ENCODE measurements at regions of chr2 and their contacts with region 1.

Region 1: DNA sequence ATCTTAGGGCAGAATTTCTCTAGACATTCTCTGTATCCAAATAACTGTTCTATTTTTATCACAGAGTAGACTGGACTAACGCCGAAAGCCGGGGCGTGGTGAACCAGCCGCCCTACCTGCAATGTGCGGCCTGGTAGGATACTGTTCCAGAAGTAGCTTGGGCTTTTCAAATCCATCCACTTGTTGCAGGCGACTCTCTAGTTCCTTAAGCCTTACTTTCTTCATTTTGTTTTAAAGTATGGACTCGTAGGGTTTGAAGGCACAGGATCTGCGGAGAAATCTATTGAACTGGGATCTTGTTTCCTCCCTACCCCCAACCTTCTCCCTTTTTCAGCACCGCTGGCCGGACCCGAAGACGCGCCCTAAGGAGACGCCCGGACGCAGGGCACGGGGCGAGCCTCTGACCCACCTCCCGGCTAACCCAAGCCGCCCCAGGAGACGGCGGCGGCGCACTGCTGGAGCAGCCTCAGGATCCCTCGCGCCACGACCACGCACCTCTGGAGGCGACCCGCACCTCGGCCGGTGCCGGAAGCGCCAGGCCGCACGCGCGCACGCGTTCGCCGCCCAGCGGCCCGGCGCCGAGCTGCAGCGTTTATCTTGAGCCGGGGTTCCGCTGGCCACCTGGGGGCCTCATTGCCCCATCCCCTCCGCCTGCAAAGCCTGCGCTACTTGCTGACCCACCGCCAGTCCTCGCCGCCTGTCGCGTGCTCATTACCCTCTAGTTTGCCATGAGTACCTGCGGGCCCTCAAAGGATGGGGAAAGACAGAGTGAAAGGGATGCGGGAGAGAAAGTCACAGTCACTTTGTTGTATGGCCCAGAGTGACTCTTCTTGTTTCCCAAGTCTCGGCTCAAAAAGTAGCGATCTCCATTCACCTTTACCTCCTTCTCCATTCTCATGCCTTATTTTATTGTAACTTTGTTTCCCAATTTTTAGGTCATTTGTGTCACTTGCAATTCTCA is at the start of gene METTL5:
- DNase-seq: peak; percentile 48 to 89 (median 69)
- ATAC-seq: peak; percentile 64
- H3K4me3 ChIP-seq: peak within 1 kb of the TSS; percentile 94
- H3K4me3 Mint-ChIP-seq: peak within 1 kb of the TSS; percentile 89
- H3K27ac ChIP-seq: peak within 1 kb of the TSS; percentile 37 to 63
- H3K27ac Mint-ChIP-seq: peak within 1 kb of the TSS; percentile 82
- H3K4me1 ChIP-seq: peaks cover 52% of the 10 kb centered on the region
- H3K4me1 Mint-ChIP-seq: peaks cover 73% of the 10 kb centered on the region
- H3K27me3 ChIP-seq: no peaks in the 10 kb centered on the region
- H3K27me3 Mint-ChIP-seq: no peaks in the 10 kb centered on the region
- CTCF ChIP-seq: peak; percentile 91
- total RNA-seq, gene METTL5: 13.2 to 16.0 TPM

Region 2: GRCh38 chr2:169573160-169573973 is 251.3 kb before region 1 on chr2 and contains the start of gene FASTKD1:
- CTCF ChIA-PET with region 1: interaction called, 3 read pairs
- POLR2A ChIA-PET with region 1: interaction called, 3 read pairs
- intact Hi-C with region 1: loop called in 1 of 2 experiments (anchors 5 kb)
- DNase-seq: peak; percentile 67 to 94 (median 80)
- ATAC-seq: peak; percentile 100
- H3K4me3 ChIP-seq: peak within 1 kb of the TSS; percentile 98
- H3K4me3 Mint-ChIP-seq: peak within 1 kb of the TSS; percentile 99
- H3K27ac ChIP-seq: peak within 1 kb of the TSS; percentile 1 to 68
- H3K27ac Mint-ChIP-seq: peak within 1 kb of the TSS; percentile 79
- H3K4me1 ChIP-seq: peaks cover 6% of the 10 kb centered on the region
- H3K4me1 Mint-ChIP-seq: peaks cover 25% of the 10 kb centered on the region
- H3K27me3 ChIP-seq: no peaks in the 10 kb centered on the region
- H3K27me3 Mint-ChIP-seq: peaks cover 4% of the 10 kb centered on the region
- CTCF ChIP-seq: no peak
- total RNA-seq, gene FASTKD1: 6.3 to 7.2 TPM

Region 3: DNA sequence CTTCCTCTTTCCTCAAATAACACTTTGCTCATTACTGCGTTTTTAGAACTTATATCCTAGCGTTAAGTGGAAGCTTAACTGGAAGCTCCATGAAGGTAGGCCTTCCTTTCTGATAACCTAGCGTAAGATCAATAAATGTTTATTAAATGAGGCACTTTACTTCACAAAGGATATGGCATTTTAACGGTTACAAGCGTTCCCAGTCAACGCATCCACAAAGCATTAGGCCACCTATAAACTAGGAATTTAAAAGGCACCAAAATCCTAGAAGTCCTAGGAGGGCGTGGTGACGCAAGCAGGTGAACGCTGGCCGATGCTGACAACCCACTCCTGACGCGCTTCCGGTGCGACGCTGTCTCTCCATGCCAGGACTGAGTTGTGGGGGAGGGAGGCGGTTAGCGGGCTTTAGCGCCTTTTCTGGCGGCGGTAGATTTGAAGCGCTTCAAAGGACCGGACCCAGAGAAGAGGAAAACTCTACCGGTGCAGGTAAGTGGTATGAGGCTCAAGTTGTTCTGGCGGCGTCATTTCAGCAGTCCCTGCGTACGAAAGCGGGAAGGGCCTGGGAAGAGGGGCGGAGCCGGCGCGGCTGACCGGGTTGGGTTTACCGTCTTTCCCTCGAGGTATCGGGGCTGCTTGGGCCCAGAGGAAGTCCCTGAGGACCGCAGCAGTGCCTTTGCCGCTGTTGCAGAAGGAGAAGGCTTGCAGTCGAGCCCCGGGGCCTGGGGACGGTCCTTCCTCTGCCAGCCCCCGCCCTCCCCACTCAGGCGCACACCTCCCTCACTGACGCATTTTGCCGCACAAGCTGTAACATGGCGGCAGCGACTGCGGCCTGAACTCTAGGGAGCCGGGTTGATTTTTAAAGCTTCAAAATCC is 240.4 kb before region 1 on chr2 and contains the start of gene PPIG:
- CTCF ChIA-PET with region 1: no interaction called
- POLR2A ChIA-PET with region 1: interaction called, 18 read pairs
- intact Hi-C with region 1: loop called in 1 of 2 experiments (anchors 5 kb)
- DNase-seq: peak; percentile 73 to 96 (median 82)
- ATAC-seq: peak; percentile 92
- H3K4me3 ChIP-seq: peak within 1 kb of the TSS; percentile 81
- H3K4me3 Mint-ChIP-seq: peak within 1 kb of the TSS; percentile 98
- H3K27ac ChIP-seq: peak within 1 kb of the TSS; percentile 97 to 99
- H3K27ac Mint-ChIP-seq: peak within 1 kb of the TSS; percentile 99
- H3K4me1 ChIP-seq: peaks cover 24% of the 10 kb centered on the region
- H3K4me1 Mint-ChIP-seq: peaks cover 39% of the 10 kb centered on the region
- H3K27me3 ChIP-seq: no peaks in the 10 kb centered on the region
- H3K27me3 Mint-ChIP-seq: no peaks in the 10 kb centered on the region
- CTCF ChIP-seq: no peak
- total RNA-seq, gene PPIG: 83.4 to 87.8 TPM

Region 4: GRCh38 chr2:169694113-169694903 is 130.3 kb before region 1 on chr2 and contains the starts of genes CFAP210 and PHOSPHO2:
- CTCF ChIA-PET with region 1: interaction called, 15 read pairs
- POLR2A ChIA-PET with region 1: interaction called, 4 read pairs
- intact Hi-C with region 1: loop called (anchors 2 to 5 kb)
- DNase-seq: peak; percentile 97 to 99 (median 99)
- ATAC-seq: peak; percentile 91
- H3K4me3 ChIP-seq: peak within 1 kb of the TSS; percentile 70
- H3K4me3 Mint-ChIP-seq: peak within 1 kb of the TSS; percentile 91
- H3K27ac ChIP-seq: peak within 1 kb of the TSS; percentile 80 to 91
- H3K27ac Mint-ChIP-seq: peak within 1 kb of the TSS; percentile 95
- H3K4me1 ChIP-seq: peaks cover 18% of the 10 kb centered on the region
- H3K4me1 Mint-ChIP-seq: peaks cover 18% of the 10 kb centered on the region
- H3K27me3 ChIP-seq: peaks cover 0 to 5% of the 10 kb centered on the region in 2 experiments
- H3K27me3 Mint-ChIP-seq: no peaks in the 10 kb centered on the region
- CTCF ChIP-seq: no peak
- total RNA-seq, gene CFAP210: 2.2 to 3.1 TPM
- total RNA-seq, gene PHOSPHO2: 4.5 to 6.5 TPM

Region 5: DNA sequence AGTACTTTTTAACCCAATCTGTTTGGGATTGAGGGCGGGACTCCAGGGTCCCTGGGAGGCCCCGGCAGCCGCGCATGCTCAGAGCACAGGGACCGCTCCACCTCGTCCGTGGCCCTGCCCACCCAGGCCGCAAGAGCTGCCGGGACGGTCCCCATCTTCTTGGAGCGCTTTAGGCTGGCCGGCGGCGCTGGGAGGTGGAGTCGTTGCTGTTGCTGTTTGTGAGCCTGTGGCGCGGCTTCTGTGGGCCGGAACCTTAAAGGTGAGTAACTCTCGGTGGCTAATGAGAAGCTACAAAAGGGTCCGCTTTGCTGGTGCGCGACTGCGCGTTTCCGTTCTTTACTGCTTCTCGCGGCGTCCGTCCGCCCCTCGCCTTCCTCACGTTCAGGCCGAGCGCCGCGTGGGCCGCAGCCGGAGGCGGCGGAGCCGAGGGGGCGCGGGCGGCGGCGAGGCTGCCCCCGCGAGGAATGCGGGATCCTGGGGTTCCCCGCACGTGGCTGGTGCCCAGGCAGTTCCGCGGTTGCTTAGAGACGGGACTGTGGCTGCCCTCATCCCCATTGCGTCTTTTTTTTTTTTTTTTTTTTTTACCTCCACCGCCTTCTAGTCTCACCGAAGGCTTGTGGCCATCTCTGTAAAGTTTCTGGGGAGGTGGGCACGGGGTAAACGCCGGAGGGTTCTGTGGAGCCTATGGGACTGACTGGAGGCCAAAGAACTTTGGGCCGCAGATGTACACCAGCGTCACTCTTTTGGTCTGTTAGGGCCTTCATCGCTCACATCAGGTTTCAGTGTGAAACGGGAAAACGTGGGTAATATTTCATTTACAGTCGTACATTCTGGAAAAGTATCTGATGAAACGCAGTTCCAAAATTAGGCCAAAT is 25.7 kb before region 1 on chr2 and contains the start of gene SSB:
- CTCF ChIA-PET with region 1: interaction called, 17 read pairs
- POLR2A ChIA-PET with region 1: interaction called, 16 read pairs
- intact Hi-C with region 1: loop called (anchors 2 kb)
- DNase-seq: peak; percentile 81 to 97 (median 92)
- ATAC-seq: peak; percentile 94
- H3K4me3 ChIP-seq: peak within 1 kb of the TSS; percentile 87
- H3K4me3 Mint-ChIP-seq: peak within 1 kb of the TSS; percentile 91
- H3K27ac ChIP-seq: peak within 1 kb of the TSS; percentile 86 to 87
- H3K27ac Mint-ChIP-seq: peak within 1 kb of the TSS; percentile 96
- H3K4me1 ChIP-seq: peaks cover 23% of the 10 kb centered on the region
- H3K4me1 Mint-ChIP-seq: peaks cover 46% of the 10 kb centered on the region
- H3K27me3 ChIP-seq: no peaks in the 10 kb centered on the region
- H3K27me3 Mint-ChIP-seq: no peaks in the 10 kb centered on the region
- CTCF ChIP-seq: no peak
- total RNA-seq, gene SSB: 174 to 181 TPM

Region 6: GRCh38 chr2:169877398-169877797 is 52.7 kb after region 1 on chr2:
- CTCF ChIA-PET with region 1: interaction called, 6 read pairs
- POLR2A ChIA-PET with region 1: no interaction called
- intact Hi-C with region 1: loop called in 1 of 2 experiments (anchors 5 kb)
- DNase-seq: peak in 4 of 14 experiments; percentile 9 to 30 (median 20)
- ATAC-seq: no peak
- H3K4me3 ChIP-seq: no peak overlapping the region
- H3K4me3 Mint-ChIP-seq: no peak overlapping the region
- H3K27ac ChIP-seq: no peak overlapping the region
- H3K27ac Mint-ChIP-seq: peak overlapping the region; percentile 21
- H3K4me1 ChIP-seq: no peaks in the 10 kb centered on the region
- H3K4me1 Mint-ChIP-seq: peaks cover 4% of the 10 kb centered on the region
- H3K27me3 ChIP-seq: no peaks in the 10 kb centered on the region
- H3K27me3 Mint-ChIP-seq: no peaks in the 10 kb centered on the region
- CTCF ChIP-seq: no peak

Region 7: GRCh38 chr2:169895294-169895985 is 70.8 kb after region 1 on chr2:
- CTCF ChIA-PET with region 1: no interaction called
- POLR2A ChIA-PET with region 1: no interaction called
- intact Hi-C with region 1: no loop called
- DNase-seq: no peak
- ATAC-seq: no peak
- H3K4me3 ChIP-seq: no peak overlapping the region
- H3K4me3 Mint-ChIP-seq: no peak overlapping the region
- H3K27ac ChIP-seq: no peak overlapping the region
- H3K27ac Mint-ChIP-seq: no peak overlapping the region
- H3K4me1 ChIP-seq: no peaks in the 10 kb centered on the region
- H3K4me1 Mint-ChIP-seq: no peaks in the 10 kb centered on the region
- H3K27me3 ChIP-seq: no peaks in the 10 kb centered on the region
- H3K27me3 Mint-ChIP-seq: no peaks in the 10 kb centered on the region
- CTCF ChIP-seq: no peak

Region 8: GRCh38 chr2:169928463-169928864 is 103.8 kb after region 1 on chr2:
- CTCF ChIA-PET with region 1: interaction called, 4 read pairs
- POLR2A ChIA-PET with region 1: interaction called, 3 read pairs
- intact Hi-C with region 1: loop called in 1 of 2 experiments (anchors 5 kb)
- DNase-seq: peak in 3 of 14 experiments; percentile 58 to 61 (median 60)
- ATAC-seq: peak; percentile 37
- H3K4me3 ChIP-seq: no peak overlapping the region
- H3K4me3 Mint-ChIP-seq: no peak overlapping the region
- H3K27ac ChIP-seq: no peak overlapping the region
- H3K27ac Mint-ChIP-seq: no peak overlapping the region
- H3K4me1 ChIP-seq: no peaks in the 10 kb centered on the region
- H3K4me1 Mint-ChIP-seq: no peaks in the 10 kb centered on the region
- H3K27me3 ChIP-seq: no peaks in the 10 kb centered on the region
- H3K27me3 Mint-ChIP-seq: no peaks in the 10 kb centered on the region
- CTCF ChIP-seq: peak; percentile 92